ENCODE measurements at regions of chr1 and their contacts with region 1.

Region 1: GRCh38 chr1:94805912-94806311 is 14.2 kb upstream of the SLC44A3 start:
- DNase-seq: no peak
- ATAC-seq: peak; percentile 79
- H3K4me3 ChIP-seq: no peak overlapping the region
- H3K27ac ChIP-seq: no peak overlapping the region
- H3K4me1 ChIP-seq: no peaks in the 10 kb centered on the region
- H3K27me3 ChIP-seq: no peaks in the 10 kb centered on the region
- CTCF ChIP-seq: peak; percentile 80 to 92 (median 90)
- EP300 ChIP-seq: no peak
- POLR2A ChIP-seq: no peak
- RAD21 ChIP-seq: peak; percentile 98

Region 2: GRCh38 chr1:94039514-94039870 is 766.4 kb before region 1 on chr1:
- CTCF ChIA-PET with region 1: interaction called, 24 read pairs
- POLR2A ChIA-PET with region 1: no interaction called
- RAD21 ChIA-PET with region 1: no interaction called
- SMC1A ChIA-PET with region 1: interaction called, 5 read pairs
- in situ Hi-C with region 1: no loop called
- intact Hi-C with region 1: no loop called
- DNase-seq: no peak
- ATAC-seq: peak; percentile 65
- H3K4me3 ChIP-seq: no peak overlapping the region
- H3K27ac ChIP-seq: no peak overlapping the region
- H3K4me1 ChIP-seq: peaks cover 6% of the 10 kb centered on the region; the same call in 1 of the 2 replicates
- H3K27me3 ChIP-seq: no peaks in the 10 kb centered on the region; a peak in 1 of 4 replicates
- CTCF ChIP-seq: peak; percentile 78 to 92 (median 86)
- EP300 ChIP-seq: no peak
- POLR2A ChIP-seq: no peak
- RAD21 ChIP-seq: peak; percentile 53

Region 3: DNA sequence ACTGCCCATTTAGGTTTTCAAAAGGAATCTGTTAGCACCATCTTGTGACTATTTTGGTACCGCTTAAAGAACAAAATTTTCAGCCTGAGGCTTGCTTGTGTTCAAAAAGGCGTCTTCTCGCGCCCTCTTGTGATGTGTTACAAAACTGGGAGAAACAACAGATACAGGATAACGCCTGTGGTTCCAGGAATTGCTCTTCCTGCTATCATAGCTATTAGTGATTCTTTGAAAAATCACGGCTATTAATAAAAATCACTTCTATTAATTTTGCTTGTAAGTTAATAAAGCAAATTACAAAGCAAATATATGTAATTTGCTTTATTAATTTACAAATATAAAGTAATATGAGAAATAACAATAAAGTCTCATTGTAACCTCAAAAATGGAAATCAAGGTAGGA is 470.0 kb before region 1 on chr1:
- CTCF ChIA-PET with region 1: interaction called, 3 read pairs
- POLR2A ChIA-PET with region 1: no interaction called
- RAD21 ChIA-PET with region 1: interaction called, 3 read pairs
- SMC1A ChIA-PET with region 1: no interaction called
- in situ Hi-C with region 1: no loop called
- intact Hi-C with region 1: loop called (anchors 10 kb)
- DNase-seq: no peak
- ATAC-seq: peak; percentile 69
- H3K4me3 ChIP-seq: no peak overlapping the region
- H3K27ac ChIP-seq: no peak overlapping the region; the same call in 1 of the 2 replicates
- H3K4me1 ChIP-seq: peaks cover 23% of the 10 kb centered on the region
- H3K27me3 ChIP-seq: no peaks in the 10 kb centered on the region
- CTCF ChIP-seq: peak; percentile 61 to 82 (median 81)
- EP300 ChIP-seq: no peak
- POLR2A ChIP-seq: no peak
- RAD21 ChIP-seq: peak; percentile 93

Region 4: GRCh38 chr1:94481473-94481933 is 324.4 kb before region 1 on chr1:
- CTCF ChIA-PET with region 1: interaction called, 131 read pairs
- POLR2A ChIA-PET with region 1: interaction called, 4 read pairs
- RAD21 ChIA-PET with region 1: interaction called, 77 read pairs
- SMC1A ChIA-PET with region 1: interaction called, 96 read pairs
- in situ Hi-C with region 1: loop called (anchors 5 kb)
- intact Hi-C with region 1: loop called (anchors 1 kb)
- DNase-seq: peak; percentile 9
- ATAC-seq: peak; percentile 98
- H3K4me3 ChIP-seq: no peak overlapping the region
- H3K27ac ChIP-seq: no peak overlapping the region
- H3K4me1 ChIP-seq: no peaks in the 10 kb centered on the region
- H3K27me3 ChIP-seq: no peaks in the 10 kb centered on the region
- CTCF ChIP-seq: peak; percentile 79 to 84 (median 83)
- EP300 ChIP-seq: no peak
- POLR2A ChIP-seq: no peak
- RAD21 ChIP-seq: peak; percentile 82

Region 5: GRCh38 chr1:94514095-94514727 is 291.7 kb before region 1 on chr1:
- CTCF ChIA-PET with region 1: interaction called, 127 read pairs
- POLR2A ChIA-PET with region 1: no interaction called
- RAD21 ChIA-PET with region 1: interaction called, 16 read pairs
- SMC1A ChIA-PET with region 1: interaction called, 19 read pairs
- in situ Hi-C with region 1: no loop called
- intact Hi-C with region 1: loop called (anchors 2 kb)
- DNase-seq: no peak
- ATAC-seq: peak; percentile 78
- H3K4me3 ChIP-seq: no peak overlapping the region
- H3K27ac ChIP-seq: no peak overlapping the region
- H3K4me1 ChIP-seq: no peaks in the 10 kb centered on the region
- H3K27me3 ChIP-seq: no peaks in the 10 kb centered on the region
- CTCF ChIP-seq: peak; percentile 48 to 55 (median 53); a peak in 5 of 6 replicates
- EP300 ChIP-seq: no peak
- POLR2A ChIP-seq: no peak
- RAD21 ChIP-seq: peak; percentile 56

Region 6: GRCh38 chr1:94792473-94793295 is 13.2 kb before region 1 on chr1:
- CTCF ChIA-PET with region 1: interaction called, 12 read pairs
- POLR2A ChIA-PET with region 1: no interaction called
- RAD21 ChIA-PET with region 1: no interaction called
- SMC1A ChIA-PET with region 1: interaction called, 6 read pairs
- in situ Hi-C with region 1: no loop called
- intact Hi-C with region 1: loop called (anchors 2 kb)
- DNase-seq: peak; percentile 45
- ATAC-seq: peak; percentile 99
- H3K4me3 ChIP-seq: no peak overlapping the region
- H3K27ac ChIP-seq: no peak overlapping the region
- H3K4me1 ChIP-seq: peaks cover 4% of the 10 kb centered on the region; the same call in 1 of the 2 replicates
- H3K27me3 ChIP-seq: no peaks in the 10 kb centered on the region
- CTCF ChIP-seq: peak in 2 of 3 experiments; percentile 12 to 32; a peak in 1 of 6 replicates
- EP300 ChIP-seq: no peak
- POLR2A ChIP-seq: no peak
- RAD21 ChIP-seq: 0 out of 2 replicates have a peak, but pooled peaks have one; percentile 10